GM12878 (cell line): ENCODE measurements at regions of chr16 and their contacts with region 1.

Region 1: DNA sequence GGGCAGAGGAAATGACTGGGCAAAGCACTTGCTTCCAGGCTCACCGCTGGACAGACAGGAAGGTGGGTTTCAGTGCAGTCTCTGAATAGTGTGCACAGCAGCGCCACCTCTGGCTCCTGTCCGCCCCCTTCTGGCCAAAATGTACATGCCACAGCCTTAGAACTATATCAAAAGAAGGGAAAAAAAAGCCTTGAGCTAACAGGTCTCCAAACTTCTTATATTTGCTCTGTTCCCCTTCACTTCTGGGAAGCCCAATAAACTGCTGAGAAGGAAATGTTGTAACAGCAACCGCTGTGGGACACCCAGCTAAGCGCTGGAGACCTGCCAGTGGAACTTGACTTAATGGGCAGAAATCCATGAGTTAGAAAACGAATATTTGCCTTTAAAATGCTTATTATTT is 17.5 kb downstream of the COG7 start:
- DNase-seq: peak; percentile 15
- ATAC-seq: peak; percentile 100
- H3K4me3 ChIP-seq: no peak overlapping the region
- H3K27ac ChIP-seq: no peak overlapping the region
- H3K4me1 ChIP-seq: no peaks in the 10 kb centered on the region
- H3K27me3 ChIP-seq: no peaks in the 10 kb centered on the region
- CTCF ChIP-seq: peak; percentile 89 to 93 (median 91)
- EP300 ChIP-seq: no peak
- POLR2A ChIP-seq: no peak
- RAD21 ChIP-seq: peak; percentile 72

Region 2: GRCh38 chr16:22983614-22984013 is 451.9 kb before region 1 on chr16:
- CTCF ChIA-PET with region 1: no interaction called
- POLR2A ChIA-PET with region 1: no interaction called
- RAD21 ChIA-PET with region 1: no interaction called
- SMC1A ChIA-PET with region 1: no interaction called
- in situ Hi-C with region 1: no loop called
- intact Hi-C with region 1: no loop called
- DNase-seq: no peak
- ATAC-seq: no peak
- H3K4me3 ChIP-seq: no peak overlapping the region
- H3K27ac ChIP-seq: no peak overlapping the region
- H3K4me1 ChIP-seq: no peaks in the 10 kb centered on the region
- H3K27me3 ChIP-seq: no peaks in the 10 kb centered on the region
- CTCF ChIP-seq: no peak
- EP300 ChIP-seq: no peak
- POLR2A ChIP-seq: no peak
- RAD21 ChIP-seq: no peak

Region 3: DNA sequence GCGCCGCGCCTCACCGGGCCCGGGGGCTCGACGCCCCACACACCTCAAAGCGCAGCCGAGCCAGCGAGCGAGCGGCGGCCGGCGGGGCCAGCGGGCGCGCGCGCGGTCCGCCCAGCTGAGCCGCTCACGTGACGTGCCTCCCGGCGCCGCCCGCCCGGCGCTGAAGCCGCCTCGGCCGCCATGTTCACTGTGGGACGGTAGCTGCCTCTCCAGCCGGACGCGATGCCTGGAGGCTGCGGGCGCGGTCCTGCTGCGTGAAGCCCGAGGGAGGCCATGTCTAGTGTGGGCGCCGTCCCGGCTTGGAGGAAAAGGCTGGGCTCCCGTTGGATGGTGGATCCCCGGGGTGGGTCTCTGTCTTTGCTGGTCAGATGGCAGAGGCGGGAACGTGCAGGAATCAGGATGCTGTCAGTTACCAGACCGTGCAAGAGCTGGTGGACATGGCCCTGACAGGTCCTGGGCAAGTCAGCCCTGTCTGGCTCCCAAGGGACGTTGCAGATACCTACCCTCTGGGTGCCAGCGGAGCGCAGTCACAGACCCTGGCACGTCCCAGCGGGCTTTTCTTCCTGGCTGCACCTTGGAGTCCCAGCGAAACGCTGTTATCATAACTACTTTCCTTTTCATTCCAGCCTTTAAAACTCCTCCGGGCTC is 286.0 kb before region 1 on chr16 and contains the start of gene USP31:
- CTCF ChIA-PET with region 1: interaction called, 20 read pairs
- POLR2A ChIA-PET with region 1: no interaction called
- RAD21 ChIA-PET with region 1: interaction called, 3 read pairs
- SMC1A ChIA-PET with region 1: interaction called, 3 read pairs
- in situ Hi-C with region 1: no loop called
- intact Hi-C with region 1: no loop called
- DNase-seq: peak; percentile 78
- ATAC-seq: peak; percentile 99
- H3K4me3 ChIP-seq: peak within 1 kb of the TSS; percentile 79
- H3K27ac ChIP-seq: no peak within 1 kb of the TSS
- H3K4me1 ChIP-seq: no peaks in the 10 kb centered on the region; the same call in 1 of the 2 replicates
- H3K27me3 ChIP-seq: no peaks in the 10 kb centered on the region
- CTCF ChIP-seq: no peak
- EP300 ChIP-seq: no peak
- POLR2A ChIP-seq: peak; percentile 42; the same call in 1 of the 2 replicates
- RAD21 ChIP-seq: no peak
- polyA plus RNA-seq, gene USP31: 1.4 to 1.7 TPM

Region 4: DNA sequence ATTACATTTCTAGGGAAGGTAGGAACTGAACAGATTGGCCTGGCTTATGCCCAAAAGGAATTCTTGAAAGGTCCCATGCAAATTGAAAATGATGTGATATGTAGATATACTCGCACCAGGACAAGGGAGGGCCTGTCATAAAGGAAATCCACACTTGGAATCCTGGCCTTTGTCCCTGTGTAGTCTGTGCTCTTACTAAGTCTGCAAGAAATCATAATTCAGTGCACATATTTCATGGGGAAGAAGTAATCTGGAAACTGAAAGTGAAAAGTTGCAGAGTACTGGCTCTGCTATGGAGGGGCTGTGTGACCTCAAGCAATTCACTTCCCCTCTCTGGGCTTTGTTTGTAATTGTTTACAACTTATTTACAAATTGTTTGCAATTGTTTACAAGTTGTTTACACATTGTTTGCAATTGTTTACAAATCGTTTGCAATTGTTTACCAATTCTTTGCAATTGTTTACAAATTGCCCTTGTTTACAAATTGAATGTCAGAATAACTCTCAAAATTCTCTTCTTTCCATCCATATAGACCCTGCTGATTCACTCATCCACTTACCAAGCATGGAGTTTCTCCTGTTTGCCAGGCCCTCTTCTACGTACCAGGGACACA is 240.0 kb before region 1 on chr16:
- CTCF ChIA-PET with region 1: interaction called, 15 read pairs
- POLR2A ChIA-PET with region 1: no interaction called
- RAD21 ChIA-PET with region 1: interaction called, 11 read pairs
- SMC1A ChIA-PET with region 1: interaction called, 3 read pairs
- in situ Hi-C with region 1: no loop called
- intact Hi-C with region 1: no loop called
- DNase-seq: no peak
- ATAC-seq: 0 out of 3 replicates have a peak, but pooled peaks have one; percentile 34
- H3K4me3 ChIP-seq: no peak overlapping the region
- H3K27ac ChIP-seq: no peak overlapping the region
- H3K4me1 ChIP-seq: peaks cover 4% of the 10 kb centered on the region
- H3K27me3 ChIP-seq: no peaks in the 10 kb centered on the region; a peak in 1 of 4 replicates
- CTCF ChIP-seq: no peak
- EP300 ChIP-seq: no peak
- POLR2A ChIP-seq: no peak
- RAD21 ChIP-seq: no peak

Region 5: GRCh38 chr16:23302045-23302956 is 133.2 kb before region 1 on chr16 and contains the start of gene SCNN1B:
- CTCF ChIA-PET with region 1: interaction called, 83 read pairs
- POLR2A ChIA-PET with region 1: no interaction called
- RAD21 ChIA-PET with region 1: interaction called, 24 read pairs
- SMC1A ChIA-PET with region 1: interaction called, 59 read pairs
- in situ Hi-C with region 1: no loop called
- intact Hi-C with region 1: loop called (anchors 2 kb)
- DNase-seq: no peak
- ATAC-seq: peak; percentile 82
- H3K4me3 ChIP-seq: peak within 1 kb of the TSS; percentile 41; the same call in 1 of the 2 replicates
- H3K27ac ChIP-seq: no peak within 1 kb of the TSS
- H3K4me1 ChIP-seq: peaks cover 5% of the 10 kb centered on the region; the same call in 1 of the 2 replicates
- H3K27me3 ChIP-seq: peaks cover 2 to 3% of the 10 kb centered on the region in 2 experiments; a peak in 2 of 4 replicates
- CTCF ChIP-seq: peak in 2 of 3 experiments; percentile 12 to 16; a peak in 2 of 6 replicates
- EP300 ChIP-seq: no peak
- POLR2A ChIP-seq: no peak
- RAD21 ChIP-seq: no peak
- polyA plus RNA-seq, gene SCNN1B: 0.99 to 1.3 TPM

Region 6: GRCh38 chr16:23416816-23417215 is 18.7 kb before region 1 on chr16:
- CTCF ChIA-PET with region 1: interaction called, 17 read pairs
- POLR2A ChIA-PET with region 1: no interaction called
- RAD21 ChIA-PET with region 1: interaction called, 6 read pairs
- SMC1A ChIA-PET with region 1: interaction called, 12 read pairs
- in situ Hi-C with region 1: no loop called
- intact Hi-C with region 1: no loop called
- DNase-seq: no peak
- ATAC-seq: no peak
- H3K4me3 ChIP-seq: no peak overlapping the region
- H3K27ac ChIP-seq: no peak overlapping the region
- H3K4me1 ChIP-seq: no peaks in the 10 kb centered on the region
- H3K27me3 ChIP-seq: no peaks in the 10 kb centered on the region
- CTCF ChIP-seq: no peak
- EP300 ChIP-seq: no peak
- POLR2A ChIP-seq: no peak
- RAD21 ChIP-seq: no peak

Region 7: DNA sequence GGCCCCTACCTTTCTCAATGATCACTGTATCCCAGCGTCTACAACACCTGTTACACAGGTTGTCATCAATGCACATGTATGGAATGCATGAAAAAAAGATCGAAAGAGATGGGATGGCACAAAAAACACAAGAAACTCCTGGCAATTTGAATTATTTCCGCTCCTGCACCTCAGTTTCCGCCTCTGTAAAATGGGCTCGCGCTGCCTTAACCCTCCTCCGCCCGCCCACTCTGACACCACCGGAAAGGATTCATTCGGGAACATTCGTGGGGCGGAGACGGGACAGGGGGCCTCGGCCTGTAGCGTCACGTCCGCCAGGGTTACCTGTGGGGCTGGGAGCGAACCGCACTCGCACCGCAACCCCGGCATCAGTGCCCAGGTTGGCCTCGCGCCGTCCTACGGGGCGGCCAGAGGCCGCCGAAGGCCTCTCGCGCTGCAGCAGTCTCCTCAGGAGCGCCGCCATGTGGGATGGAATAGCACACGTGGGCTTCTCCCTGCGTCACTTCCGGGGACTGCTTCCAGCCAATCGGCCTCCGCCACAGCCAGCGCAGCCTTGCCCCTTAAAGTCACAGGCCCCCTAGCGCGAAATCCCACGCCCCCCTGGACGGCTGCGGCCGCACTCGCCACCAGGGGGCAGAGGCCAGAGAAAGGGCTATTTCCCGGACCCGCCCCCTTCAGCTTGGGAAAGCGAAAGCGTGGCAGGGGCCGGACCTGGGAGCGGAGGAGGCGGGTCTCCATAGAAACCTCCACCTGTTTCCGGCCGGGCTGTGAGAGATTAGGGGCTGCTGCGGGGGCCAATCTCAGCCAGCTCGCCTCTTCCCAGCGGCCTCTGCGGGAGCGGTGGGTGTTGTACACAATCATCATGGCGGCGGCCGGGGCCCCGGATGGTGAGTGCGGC is 121.6 kb after region 1 on chr16 and contains the starts of genes EARS2 and UBFD1:
- CTCF ChIA-PET with region 1: interaction called, 32 read pairs
- POLR2A ChIA-PET with region 1: no interaction called
- RAD21 ChIA-PET with region 1: interaction called, 5 read pairs
- SMC1A ChIA-PET with region 1: interaction called, 3 read pairs
- in situ Hi-C with region 1: no loop called
- intact Hi-C with region 1: no loop called
- DNase-seq: peak; percentile 95
- ATAC-seq: peak; percentile 94
- H3K4me3 ChIP-seq: peak within 1 kb of the TSS; percentile 92
- H3K27ac ChIP-seq: peak within 1 kb of the TSS; percentile 95
- H3K4me1 ChIP-seq: no peaks in the 10 kb centered on the region; the same call in none of the 2 replicates
- H3K27me3 ChIP-seq: no peaks in the 10 kb centered on the region
- CTCF ChIP-seq: peak; percentile 95 to 97 (median 96); a peak in 5 of 6 replicates
- EP300 ChIP-seq: no peak; a peak in 1 of 4 replicates
- POLR2A ChIP-seq: peak; percentile 91
- RAD21 ChIP-seq: peak; percentile 51; the same call in 1 of the 2 replicates
- polyA plus RNA-seq, gene EARS2: 12.9 to 27.0 TPM
- polyA plus RNA-seq, gene UBFD1: 7.3 to 7.9 TPM